Calu3 (cell line): ENCODE measurements at regions of chr19 and their contacts with region 1.

Region 1: DNA sequence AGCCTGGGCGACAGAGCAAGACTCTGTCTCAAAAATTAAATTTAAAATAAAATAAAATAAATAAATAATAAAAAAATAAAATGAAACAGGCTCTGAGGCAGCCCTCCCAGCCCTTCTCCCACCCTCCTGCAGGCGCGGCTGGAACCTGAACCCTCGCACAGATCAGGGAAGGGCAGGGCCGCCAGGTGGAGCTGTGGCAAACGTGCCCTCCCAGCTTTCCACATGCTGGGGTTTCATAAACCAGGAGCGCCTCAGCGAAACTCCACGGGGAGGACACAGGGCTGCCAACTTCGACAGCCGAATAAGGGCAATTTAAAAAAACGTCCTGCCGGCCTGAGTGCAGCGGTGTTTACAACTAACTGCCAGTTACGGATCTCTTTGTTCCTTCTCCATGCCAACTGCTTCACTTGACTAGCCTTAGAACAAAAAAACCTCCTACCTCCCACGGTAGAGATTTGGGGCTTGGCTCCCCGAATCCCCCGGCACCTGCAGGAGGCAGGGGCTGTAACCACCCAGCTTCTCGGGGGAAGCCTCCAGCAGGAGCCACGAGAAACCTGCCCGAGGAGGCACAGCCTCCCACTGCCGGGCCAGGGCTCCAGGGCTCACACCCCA is 15.9 kb downstream of the ZNF787 start:
- DNase-seq: peak; percentile 88
- H3K4me3 Mint-ChIP-seq: peak overlapping the region; percentile 90
- H3K27ac Mint-ChIP-seq: peak overlapping the region; percentile 89
- H3K4me1 Mint-ChIP-seq: peaks cover 45% of the 10 kb centered on the region
- H3K27me3 Mint-ChIP-seq: no peaks in the 10 kb centered on the region
- CTCF ChIP-seq: peak; percentile 85

Region 2: DNA sequence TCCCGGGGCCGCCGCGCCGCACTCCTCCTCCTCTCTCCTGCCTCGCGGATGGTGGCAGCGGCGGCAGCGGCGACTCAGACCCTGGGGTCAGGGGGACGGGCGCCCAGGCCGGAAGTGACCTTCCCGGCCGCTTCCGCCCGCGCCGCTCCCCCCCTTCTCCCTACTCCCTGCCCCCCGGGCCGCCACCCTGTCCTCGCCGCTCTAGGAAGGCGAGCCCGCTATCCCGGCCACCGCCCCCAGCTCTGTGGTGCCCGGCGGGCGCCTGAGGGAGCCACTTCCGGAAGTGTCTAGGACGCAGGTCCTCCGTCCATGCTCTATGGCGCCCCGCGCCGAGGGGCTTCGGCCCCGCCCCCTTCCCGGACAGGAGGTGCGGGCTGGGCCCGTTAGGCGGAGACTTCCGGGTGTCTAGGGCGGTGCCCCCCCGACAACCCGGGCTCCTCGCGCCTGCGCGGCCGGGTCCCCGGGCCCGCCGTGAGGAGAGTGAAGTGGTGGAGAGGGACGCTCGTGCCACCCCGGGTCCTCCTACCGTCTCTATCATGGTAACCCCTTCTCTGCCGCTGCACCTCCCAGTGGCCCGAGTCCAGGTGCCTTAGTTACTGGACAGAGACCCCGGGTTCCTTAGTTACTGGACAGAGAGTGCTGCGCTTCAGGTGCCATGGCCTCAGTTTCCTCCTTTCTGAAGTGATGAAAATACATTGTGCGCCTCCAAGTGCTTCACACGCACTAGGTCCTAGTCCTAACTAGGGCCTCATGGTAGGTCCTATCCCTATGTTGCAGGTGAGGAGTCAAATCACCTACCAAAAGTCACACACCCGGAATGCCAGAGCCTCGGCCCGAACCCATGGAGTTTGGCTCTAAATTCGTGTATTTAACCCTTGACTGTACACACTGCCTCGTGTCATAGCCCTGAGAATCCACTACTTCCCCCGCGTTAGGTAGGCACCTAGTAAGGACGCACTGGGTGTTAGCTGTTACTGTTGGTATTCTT is 16.3 kb after region 1 on chr19 and contains the start of gene ZNF787:
- CTCF ChIA-PET with region 1: interaction called, 4 read pairs
- intact Hi-C with region 1: loop called (anchors 2 kb)
- DNase-seq: peak; percentile 100
- H3K4me3 Mint-ChIP-seq: peak within 1 kb of the TSS; percentile 84
- H3K27ac Mint-ChIP-seq: peak within 1 kb of the TSS; percentile 85
- H3K4me1 Mint-ChIP-seq: peaks cover 12% of the 10 kb centered on the region
- H3K27me3 Mint-ChIP-seq: no peaks in the 10 kb centered on the region
- CTCF ChIP-seq: no peak
- total RNA-seq, gene ZNF787: 68.5 and 77.3 TPM in 2 replicates

Region 3: GRCh38 chr19:56140583-56141416 is 35.6 kb after region 1 on chr19 and contains the start of gene ZNF444:
- CTCF ChIA-PET with region 1: interaction called, 6 read pairs
- intact Hi-C with region 1: loop called (anchors 1 kb)
- DNase-seq: peak; percentile 99
- H3K4me3 Mint-ChIP-seq: peak within 1 kb of the TSS; percentile 67
- H3K27ac Mint-ChIP-seq: peak within 1 kb of the TSS; percentile 89
- H3K4me1 Mint-ChIP-seq: peaks cover 50% of the 10 kb centered on the region
- H3K27me3 Mint-ChIP-seq: no peaks in the 10 kb centered on the region
- CTCF ChIP-seq: no peak
- total RNA-seq, gene ZNF444: 78.6 and 79.1 TPM in 2 replicates

Region 4: DNA sequence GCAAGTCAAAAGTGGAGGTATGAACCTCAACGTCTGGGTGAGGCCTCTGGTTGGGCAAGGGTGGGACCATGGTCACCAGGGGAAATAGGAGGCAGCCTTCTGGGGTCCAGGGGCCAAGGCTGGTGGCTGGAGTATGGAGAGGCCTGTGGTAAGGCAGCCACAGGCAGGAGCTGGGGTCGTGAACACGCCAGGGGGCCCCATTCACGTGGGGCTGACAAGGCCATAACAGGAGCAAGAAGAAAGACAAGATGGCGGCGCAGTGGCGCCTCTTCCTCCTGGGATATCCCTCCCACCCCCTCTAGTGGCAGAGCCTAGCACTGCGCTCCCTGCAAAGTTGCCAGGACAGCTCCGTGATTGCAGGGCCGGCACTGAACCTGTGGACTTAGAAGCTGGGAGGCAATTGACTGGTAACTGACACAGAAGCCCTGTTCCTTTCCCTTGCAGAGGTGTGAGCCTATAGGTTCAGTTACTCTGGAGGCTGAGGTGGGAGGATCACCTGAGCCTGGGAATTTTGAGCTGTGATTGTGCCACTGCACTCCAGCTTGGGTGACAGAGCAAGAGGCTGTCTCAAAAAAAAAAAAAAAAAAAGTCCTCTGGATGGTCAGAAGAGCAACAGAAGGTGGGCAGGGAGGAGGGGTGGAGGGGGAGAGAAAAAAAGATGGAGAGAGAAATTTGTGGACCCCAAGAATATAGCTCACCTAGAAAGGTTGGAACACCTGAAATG is 147.7 kb after region 1 on chr19:
- CTCF ChIA-PET with region 1: interaction called, 12 read pairs
- intact Hi-C with region 1: no loop called
- DNase-seq: peak; percentile 91
- H3K4me3 Mint-ChIP-seq: no peak overlapping the region
- H3K27ac Mint-ChIP-seq: peak overlapping the region; percentile 39
- H3K4me1 Mint-ChIP-seq: no peaks in the 10 kb centered on the region
- H3K27me3 Mint-ChIP-seq: no peaks in the 10 kb centered on the region
- CTCF ChIP-seq: peak; percentile 88

Region 5: GRCh38 chr19:56284746-56285145 is 179.6 kb after region 1 on chr19:
- CTCF ChIA-PET with region 1: no interaction called
- intact Hi-C with region 1: no loop called
- DNase-seq: no peak
- H3K4me3 Mint-ChIP-seq: no peak overlapping the region
- H3K27ac Mint-ChIP-seq: no peak overlapping the region
- H3K4me1 Mint-ChIP-seq: no peaks in the 10 kb centered on the region
- H3K27me3 Mint-ChIP-seq: no peaks in the 10 kb centered on the region
- CTCF ChIP-seq: no peak